Psoas muscle (tissue), 8 donors: ENCODE measurements at regions of chr1 and their contacts with region 1.

Region 1: DNA sequence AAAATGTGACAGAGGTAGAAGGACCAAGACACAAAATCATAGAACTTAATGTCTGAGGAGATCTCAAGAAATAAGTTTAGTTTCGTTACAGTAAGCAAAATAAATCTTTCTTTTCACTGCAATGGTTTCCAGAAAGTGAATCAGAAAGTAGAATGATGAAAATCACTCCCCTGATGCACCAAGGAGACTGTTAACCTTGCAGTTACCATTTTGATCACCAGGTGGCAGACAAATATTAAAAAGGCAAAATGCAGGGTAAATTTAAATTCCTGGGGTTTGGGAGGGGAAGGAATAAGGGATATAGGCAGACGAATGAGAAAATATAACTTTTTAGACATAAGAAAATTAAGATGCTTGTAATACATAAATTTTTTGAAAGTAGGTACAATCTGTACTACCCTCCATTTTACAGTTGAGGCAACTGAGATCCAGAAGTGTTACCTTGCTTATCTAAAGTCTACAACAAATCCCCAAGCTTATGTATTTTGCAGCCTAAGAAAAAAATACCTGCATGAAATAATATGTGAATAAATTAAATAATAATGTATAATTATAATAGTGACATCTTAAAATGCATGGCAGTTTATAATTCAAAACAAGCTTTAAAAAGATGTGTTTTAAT is 253.2 kb downstream of the CRB1 start:
- DNase-seq: no peak
- ATAC-seq: no peak
- H3K4me3 ChIP-seq: no peak overlapping the region
- H3K27ac ChIP-seq: no peak overlapping the region
- H3K4me1 ChIP-seq: no peaks in the 10 kb centered on the region
- H3K27me3 ChIP-seq: no peaks in the 10 kb centered on the region
- CTCF ChIP-seq: peak; percentile 50

Region 2: GRCh38 chr1:197336571-197336970 is 184.7 kb before region 1 on chr1:
- intact Hi-C with region 1: no loop called
- DNase-seq: no peak
- ATAC-seq: no peak
- H3K4me3 ChIP-seq: no peak overlapping the region
- H3K27ac ChIP-seq: no peak overlapping the region
- H3K4me1 ChIP-seq: no peaks in the 10 kb centered on the region
- H3K27me3 ChIP-seq: no peaks in the 10 kb centered on the region
- CTCF ChIP-seq: no peak

Region 3: DNA sequence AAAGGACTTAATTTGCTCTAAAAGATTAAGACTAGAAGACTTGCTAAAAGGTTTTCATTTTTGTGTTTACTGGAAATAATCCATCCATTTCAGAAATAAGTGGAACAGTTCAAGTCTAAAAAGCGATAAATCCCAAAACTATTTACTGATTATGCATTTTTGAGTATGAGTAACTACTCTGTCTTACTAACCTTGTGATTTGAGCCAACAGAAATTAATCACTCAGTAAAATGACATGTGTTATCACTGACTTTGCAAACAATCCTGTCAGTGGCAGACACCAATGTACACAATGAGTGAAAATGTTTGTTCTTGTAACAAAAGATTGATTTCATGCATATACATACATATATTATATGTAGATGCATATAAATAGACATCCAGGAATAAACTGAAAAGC is 36.1 kb after region 1 on chr1:
- intact Hi-C with region 1: no loop called
- DNase-seq: no peak
- ATAC-seq: no peak
- H3K4me3 ChIP-seq: no peak overlapping the region
- H3K27ac ChIP-seq: no peak overlapping the region
- H3K4me1 ChIP-seq: peaks cover 18% of the 10 kb centered on the region
- H3K27me3 ChIP-seq: no peaks in the 10 kb centered on the region
- CTCF ChIP-seq: no peak

Region 4: DNA sequence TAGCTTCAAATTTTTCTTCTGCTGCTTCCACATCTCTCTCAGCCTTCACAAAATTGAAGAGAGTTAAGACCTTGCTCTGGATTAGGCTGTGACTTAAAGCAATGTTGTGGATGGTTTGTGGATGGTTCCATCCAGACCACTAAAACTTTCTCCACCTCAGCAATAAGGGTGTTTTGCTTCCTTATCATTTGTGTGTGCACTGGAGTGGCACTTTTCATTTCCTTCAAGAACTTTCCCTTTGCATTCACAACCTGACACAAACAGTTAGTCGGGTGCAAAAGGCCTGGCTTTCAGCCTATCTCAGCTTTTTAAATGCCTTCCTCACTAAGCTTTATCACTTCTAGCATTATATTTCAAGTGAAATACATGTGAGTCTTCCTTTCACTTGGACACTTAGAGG is 223.8 kb after region 1 on chr1:
- intact Hi-C with region 1: no loop called
- DNase-seq: no peak
- ATAC-seq: no peak
- H3K4me3 ChIP-seq: no peak overlapping the region
- H3K27ac ChIP-seq: no peak overlapping the region
- H3K4me1 ChIP-seq: no peaks in the 10 kb centered on the region
- H3K27me3 ChIP-seq: no peaks in the 10 kb centered on the region
- CTCF ChIP-seq: no peak

Region 5: DNA sequence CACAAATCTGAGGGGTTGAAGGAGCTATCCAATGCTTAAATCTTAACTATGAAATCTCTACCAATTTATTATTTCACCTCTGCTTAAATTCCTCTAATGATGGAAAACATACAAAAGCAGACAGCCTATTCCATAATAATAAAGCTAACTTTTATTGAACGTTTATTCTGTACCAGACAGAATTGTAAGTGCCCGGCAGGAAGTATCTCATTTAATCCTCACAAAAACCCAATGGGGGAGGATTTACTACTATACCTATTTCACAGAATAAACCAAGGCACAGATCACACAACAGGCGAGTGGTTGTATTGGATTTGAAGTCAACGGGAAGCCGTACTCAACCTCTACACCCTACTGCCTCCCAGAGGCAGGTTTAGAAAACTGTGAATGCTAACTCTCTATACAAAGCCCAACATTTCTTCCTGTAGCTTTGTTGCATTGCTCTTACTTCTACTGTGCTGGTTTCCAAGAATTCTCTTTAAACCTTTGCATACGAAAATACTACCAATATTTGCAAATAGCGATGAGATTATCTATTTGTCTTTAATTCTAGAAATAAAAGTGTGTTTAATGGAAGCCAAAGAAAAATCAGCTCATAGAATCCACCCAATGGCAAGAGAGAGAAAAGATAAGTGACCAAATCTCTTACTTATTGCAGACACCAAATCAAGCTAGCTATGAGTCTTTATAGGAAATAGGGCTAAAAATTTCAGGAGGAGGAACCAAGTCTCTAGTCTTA is 347.7 kb after region 1 on chr1:
- intact Hi-C with region 1: loop called (anchors 5 to 10 kb)
- DNase-seq: no peak
- ATAC-seq: peak; percentile 60 to 92 (median 82)
- H3K4me3 ChIP-seq: no peak overlapping the region
- H3K27ac ChIP-seq: no peak overlapping the region
- H3K4me1 ChIP-seq: no peaks in the 10 kb centered on the region
- H3K27me3 ChIP-seq: no peaks in the 10 kb centered on the region
- CTCF ChIP-seq: peak; percentile 65

Region 6: GRCh38 chr1:197890936-197891335 is 369.7 kb after region 1 on chr1:
- intact Hi-C with region 1: loop called in 1 of 2 experiments (anchors 10 kb)
- DNase-seq: no peak
- ATAC-seq: no peak
- H3K4me3 ChIP-seq: no peak overlapping the region
- H3K27ac ChIP-seq: no peak overlapping the region
- H3K4me1 ChIP-seq: no peaks in the 10 kb centered on the region
- H3K27me3 ChIP-seq: peaks cover 0 to 14% (median 6%) of the 10 kb centered on the region in 3 donors
- CTCF ChIP-seq: no peak

Region 7: DNA sequence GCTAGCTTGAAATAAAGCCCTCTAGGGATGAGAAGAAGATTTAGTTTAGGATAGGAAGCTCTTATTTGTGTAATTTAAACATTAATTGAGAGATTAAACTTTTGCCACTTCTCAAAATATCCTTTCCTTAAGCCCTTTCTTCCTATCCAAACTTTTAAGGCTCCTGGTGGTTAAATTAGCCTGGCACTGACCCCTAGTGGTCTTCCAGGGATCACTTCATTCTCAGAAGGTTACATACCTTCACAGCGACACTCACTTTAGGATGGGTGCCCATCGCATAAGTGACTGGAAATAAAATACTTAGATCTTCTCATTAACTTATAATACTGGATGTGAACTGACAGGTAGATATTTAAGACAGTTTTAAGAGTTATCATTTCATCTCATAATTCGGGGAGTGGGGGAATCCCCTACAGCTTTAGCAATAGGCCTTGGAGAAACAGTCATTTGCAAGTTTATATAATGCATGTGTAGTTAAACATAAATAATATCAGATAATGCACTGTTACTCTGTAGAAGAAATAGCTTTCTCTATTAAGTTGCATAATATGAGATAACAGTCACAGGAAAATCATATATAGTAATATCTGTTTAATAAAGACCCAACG is 403.4 kb after region 1 on chr1:
- intact Hi-C with region 1: loop called (anchors 5 to 10 kb)
- DNase-seq: no peak
- ATAC-seq: peak in 2 of 4 donors; percentile 70 to 76
- H3K4me3 ChIP-seq: no peak overlapping the region
- H3K27ac ChIP-seq: no peak overlapping the region
- H3K4me1 ChIP-seq: peaks cover 2% of the 10 kb centered on the region
- H3K27me3 ChIP-seq: peaks cover 9 to 56% (median 26%) of the 10 kb centered on the region in 3 donors
- CTCF ChIP-seq: peak; percentile 71

Region 8: GRCh38 chr1:198465201-198466144 is 944.2 kb after region 1 on chr1:
- intact Hi-C with region 1: loop called (anchors 10 kb)
- DNase-seq: no peak
- ATAC-seq: peak in 1 of 4 donors; percentile 69
- H3K4me3 ChIP-seq: no peak overlapping the region
- H3K27ac ChIP-seq: no peak overlapping the region
- H3K4me1 ChIP-seq: no peaks in the 10 kb centered on the region
- H3K27me3 ChIP-seq: no peaks in the 10 kb centered on the region
- CTCF ChIP-seq: peak; percentile 59